Dorsolateral prefrontal cortex (tissue), 120 donors: ENCODE measurements at regions of chr6 and their contacts with region 1.

Region 1: DNA sequence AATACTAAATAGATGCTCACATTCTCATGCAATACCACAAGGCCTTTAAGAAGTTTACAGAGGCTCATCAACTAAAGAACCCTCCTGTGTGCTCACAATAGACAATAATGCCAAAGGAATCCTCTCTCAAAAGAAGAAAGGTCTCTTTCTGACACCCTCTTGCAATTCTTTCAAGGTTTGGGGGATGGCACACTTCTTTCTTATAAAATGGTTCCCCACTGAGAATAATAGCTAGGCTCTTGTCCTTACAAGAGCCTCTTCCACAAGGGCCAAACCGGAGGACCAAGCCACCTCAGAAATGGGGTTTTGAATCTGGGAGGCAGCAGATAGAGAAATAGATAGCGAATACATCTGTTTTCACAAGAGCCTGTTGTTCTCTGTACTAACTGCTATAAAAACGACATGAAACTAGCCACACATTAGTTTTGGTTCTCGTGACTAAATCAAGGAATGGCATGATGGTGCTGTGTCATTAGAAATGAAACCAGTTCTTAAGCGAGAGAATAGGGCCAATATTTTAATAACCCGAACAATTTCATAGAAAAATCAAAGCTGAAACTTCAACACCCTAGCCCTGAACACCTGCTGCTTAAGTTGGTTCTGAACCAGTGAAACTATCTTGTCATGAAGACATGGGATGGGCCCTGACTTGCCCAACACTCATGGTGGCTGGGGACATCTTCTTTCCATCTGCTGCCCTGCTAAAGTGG is 81.1 kb downstream of the PRDM1 start:
- DNase-seq: no peak
- H3K4me3 ChIP-seq: no peak overlapping the region
- H3K27ac ChIP-seq: no peak overlapping the region
- H3K27me3 ChIP-seq: no peaks in the 10 kb centered on the region
- CTCF ChIP-seq: no peak

Region 2: DNA sequence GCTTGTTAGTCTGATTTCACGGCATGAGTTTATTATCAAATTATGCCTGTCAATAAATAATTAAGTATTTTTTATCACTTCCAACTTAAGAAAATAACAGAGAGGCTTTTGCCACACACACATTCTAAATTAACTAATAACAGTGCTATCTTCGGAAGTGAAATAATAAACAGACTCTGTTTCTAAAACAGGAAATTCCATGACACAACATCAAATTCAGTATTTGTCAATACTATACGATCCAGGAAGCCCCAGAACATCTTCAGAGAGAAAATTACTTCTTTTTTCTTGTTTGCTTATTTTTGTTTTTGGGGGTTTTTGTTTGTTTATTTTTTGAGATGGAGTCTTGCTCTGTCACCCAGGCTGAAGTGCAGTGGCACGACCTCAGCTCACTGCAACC is 231.8 kb before region 1 on chr6:
- intact Hi-C with region 1: loop called in 1 of 2 experiments (anchors 5 kb)
- DNase-seq: no peak
- H3K4me3 ChIP-seq: no peak overlapping the region
- H3K27ac ChIP-seq: no peak overlapping the region
- H3K27me3 ChIP-seq: no peaks in the 10 kb centered on the region
- CTCF ChIP-seq: no peak

Region 3: GRCh38 chr6:106085984-106086813 is 81.1 kb before region 1 on chr6 and contains the start of gene PRDM1:
- intact Hi-C with region 1: no loop called
- DNase-seq: peak in 9 of 10 donors; percentile 43 to 90 (median 55)
- H3K4me3 ChIP-seq: peak within 1 kb of the TSS in 58 of 59 donors; percentile 20 to 68 (median 52)
- H3K27ac ChIP-seq: peak within 1 kb of the TSS in 49 of 59 donors; percentile 11 to 79 (median 57)
- H3K27me3 ChIP-seq: peaks cover 0 to 95% (median 57%) of the 10 kb centered on the region in 45 donors
- CTCF ChIP-seq: peak in 2 of 56 donors; percentile 7 to 18
- total RNA-seq, gene PRDM1: 1.9 to 9.7 (median 4.6) TPM

Region 4: DNA sequence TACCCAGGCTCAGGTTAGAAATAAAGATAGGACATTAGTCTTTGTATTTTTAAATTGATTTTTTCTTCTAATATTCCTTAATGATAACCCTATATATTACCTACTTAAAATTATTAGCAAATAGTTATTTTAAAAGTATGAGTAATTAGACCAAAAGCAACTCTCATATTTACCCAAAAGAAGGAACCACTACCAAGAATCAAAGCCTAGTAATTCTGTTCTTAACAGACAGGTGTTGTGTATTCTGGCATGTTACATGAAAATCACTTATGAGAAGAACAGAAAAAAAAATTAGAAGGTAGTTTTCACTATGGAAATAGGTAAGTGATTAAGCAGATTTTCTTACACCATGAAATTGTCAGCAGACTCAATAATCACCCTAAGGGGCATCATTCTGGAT is 53.2 kb after region 1 on chr6:
- intact Hi-C with region 1: no loop called
- DNase-seq: no peak
- H3K4me3 ChIP-seq: no peak overlapping the region
- H3K27ac ChIP-seq: no peak overlapping the region
- H3K27me3 ChIP-seq: no peaks in the 10 kb centered on the region
- CTCF ChIP-seq: no peak